ENCODE measurements at regions of chr15 and their contacts with region 1.

Region 1: DNA sequence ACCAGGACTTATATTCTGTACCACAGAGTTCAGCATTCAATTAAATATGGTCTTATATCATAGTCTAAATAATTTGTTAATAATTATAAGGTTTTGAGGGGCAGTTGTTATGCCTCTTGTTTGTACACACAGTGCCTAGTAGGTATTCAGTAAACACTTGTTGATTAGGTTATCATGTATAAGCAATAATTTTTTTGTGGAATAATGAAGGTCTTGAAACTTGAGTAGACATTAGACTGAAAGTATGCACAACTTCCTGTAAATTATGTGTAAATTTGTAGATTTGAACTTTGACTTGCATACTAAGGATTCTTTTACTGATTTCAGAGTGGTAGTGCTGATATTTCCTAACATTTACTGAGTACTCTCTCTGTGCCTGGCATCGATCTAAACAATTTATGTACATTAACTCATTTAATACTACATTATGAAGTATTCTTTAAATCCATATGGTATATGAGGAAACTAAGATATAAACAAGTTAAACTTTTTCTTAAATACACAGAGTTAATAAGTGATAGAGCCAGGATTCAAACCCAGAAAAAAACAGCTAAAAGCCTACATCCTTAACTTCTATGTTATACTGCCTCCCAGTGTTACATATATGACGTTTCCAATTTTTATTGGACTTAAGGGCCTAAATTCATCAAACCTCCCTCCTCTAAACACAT is 65.1 kb downstream of the GLCE start:
- DNase-seq: no peak
- H3K4me3 Mint-ChIP-seq: no peak overlapping the region
- H3K27ac Mint-ChIP-seq: no peak overlapping the region
- H3K4me1 Mint-ChIP-seq: peaks cover 10% of the 10 kb centered on the region
- H3K27me3 Mint-ChIP-seq: no peaks in the 10 kb centered on the region
- CTCF ChIP-seq: peak; percentile 23

Region 2: GRCh38 chr15:69049976-69050375 is 175.5 kb before region 1 on chr15:
- CTCF ChIA-PET with region 1: no interaction called
- intact Hi-C with region 1: loop called (anchors 2 kb)
- DNase-seq: no peak
- H3K4me3 Mint-ChIP-seq: no peak overlapping the region
- H3K27ac Mint-ChIP-seq: no peak overlapping the region
- H3K4me1 Mint-ChIP-seq: peaks cover 9% of the 10 kb centered on the region
- H3K27me3 Mint-ChIP-seq: peaks cover 12% of the 10 kb centered on the region
- CTCF ChIP-seq: no peak

Region 3: DNA sequence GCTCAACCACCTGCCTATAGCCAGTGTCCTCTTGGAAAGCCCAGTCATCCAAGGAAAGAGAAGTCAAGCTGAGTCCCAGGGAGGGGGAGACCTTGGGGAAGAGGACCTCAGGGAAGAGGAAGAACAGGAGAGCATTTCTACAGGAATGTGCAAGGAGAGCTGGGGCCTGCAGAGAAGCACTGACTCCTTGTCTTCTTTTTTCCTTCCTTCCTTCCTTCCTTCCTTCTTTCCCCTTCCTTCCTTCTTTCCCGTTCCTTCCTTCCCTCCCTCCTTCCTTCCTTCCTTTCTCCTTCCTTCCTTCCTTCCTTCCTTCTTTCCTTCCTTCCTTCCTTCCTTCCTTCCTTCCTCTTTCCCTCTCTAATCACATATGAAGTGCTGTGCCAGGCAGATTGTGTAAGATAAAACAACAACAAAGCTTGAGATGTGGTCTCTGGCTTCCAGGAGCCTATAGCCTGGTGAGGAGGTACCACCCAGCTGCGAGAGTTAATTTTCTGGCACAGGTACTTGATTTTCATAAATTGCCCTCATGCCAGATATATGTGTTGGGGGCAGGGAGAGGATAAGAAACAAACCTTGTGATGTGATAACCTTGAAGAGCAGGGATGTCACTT is 141.0 kb before region 1 on chr15:
- CTCF ChIA-PET with region 1: interaction called, 26 read pairs
- intact Hi-C with region 1: no loop called
- DNase-seq: no peak
- H3K4me3 Mint-ChIP-seq: no peak overlapping the region
- H3K27ac Mint-ChIP-seq: no peak overlapping the region
- H3K4me1 Mint-ChIP-seq: peaks cover 28% of the 10 kb centered on the region
- H3K27me3 Mint-ChIP-seq: peaks cover 99% of the 10 kb centered on the region
- CTCF ChIP-seq: no peak

Region 4: GRCh38 chr15:69141286-69141701 is 84.2 kb before region 1 on chr15:
- CTCF ChIA-PET with region 1: interaction called, 10 read pairs
- intact Hi-C with region 1: no loop called
- DNase-seq: peak; percentile 67
- H3K4me3 Mint-ChIP-seq: no peak overlapping the region
- H3K27ac Mint-ChIP-seq: no peak overlapping the region
- H3K4me1 Mint-ChIP-seq: peaks cover 18% of the 10 kb centered on the region
- H3K27me3 Mint-ChIP-seq: peaks cover 72% of the 10 kb centered on the region
- CTCF ChIP-seq: peak; percentile 43

Region 5: GRCh38 chr15:69185706-69186105 is 39.8 kb before region 1 on chr15:
- CTCF ChIA-PET with region 1: no interaction called
- intact Hi-C with region 1: no loop called
- DNase-seq: no peak
- H3K4me3 Mint-ChIP-seq: no peak overlapping the region
- H3K27ac Mint-ChIP-seq: no peak overlapping the region
- H3K4me1 Mint-ChIP-seq: no peaks in the 10 kb centered on the region
- H3K27me3 Mint-ChIP-seq: no peaks in the 10 kb centered on the region
- CTCF ChIP-seq: no peak

Region 6: DNA sequence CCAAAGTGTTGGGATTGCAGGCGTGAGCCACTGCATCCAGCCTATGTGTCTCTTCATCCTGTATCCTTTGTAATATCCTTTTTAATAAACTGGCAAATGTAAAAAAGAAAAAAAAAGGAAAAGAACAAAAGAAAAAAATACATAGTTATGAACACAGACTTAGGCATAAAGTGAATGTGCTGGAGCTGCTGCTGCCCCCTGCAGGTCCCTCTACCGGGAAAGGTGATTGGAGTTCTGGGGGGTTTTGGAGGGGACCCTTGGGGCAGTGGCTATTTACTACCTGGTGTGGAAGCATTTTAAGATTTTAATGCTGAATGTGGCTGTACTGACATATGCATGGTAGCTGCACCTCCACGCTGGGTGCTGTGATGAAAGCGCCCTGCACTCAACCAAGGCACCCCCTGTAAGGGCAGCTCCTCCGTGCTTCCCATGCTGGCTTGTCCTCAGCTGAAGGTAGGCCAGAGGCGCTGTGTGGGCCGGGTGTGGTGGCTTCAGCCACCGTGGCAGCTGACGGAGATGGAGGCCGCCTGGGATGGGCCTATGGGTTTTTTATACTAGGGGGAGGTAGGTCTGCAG is 277.1 kb after region 1 on chr15:
- CTCF ChIA-PET with region 1: no interaction called
- intact Hi-C with region 1: no loop called
- DNase-seq: no peak
- H3K4me3 Mint-ChIP-seq: no peak overlapping the region
- H3K27ac Mint-ChIP-seq: no peak overlapping the region
- H3K4me1 Mint-ChIP-seq: no peaks in the 10 kb centered on the region
- H3K27me3 Mint-ChIP-seq: no peaks in the 10 kb centered on the region
- CTCF ChIP-seq: no peak